CD4-positive, alpha-beta memory T cell (primary cell): ENCODE measurements at regions of chr4 and their contacts with region 1.

Region 1: GRCh38 chr4:68288393-68288740 is 42.9 kb upstream of the TMPRSS11B start:
- DNase-seq: no peak
- H3K4me3 ChIP-seq: no peak overlapping the region
- H3K4me3 Mint-ChIP-seq: no peak overlapping the region
- H3K27ac ChIP-seq: no peak overlapping the region
- H3K27ac Mint-ChIP-seq: no peak overlapping the region
- H3K4me1 ChIP-seq: no peaks in the 10 kb centered on the region
- H3K4me1 Mint-ChIP-seq: peaks cover 0 to 4% (median 0%) of the 10 kb centered on the region in 4 donors
- H3K27me3 ChIP-seq: no peaks in the 10 kb centered on the region
- H3K27me3 Mint-ChIP-seq: peaks cover 4 to 5% of the 10 kb centered on the region in 2 donors

Region 2: DNA sequence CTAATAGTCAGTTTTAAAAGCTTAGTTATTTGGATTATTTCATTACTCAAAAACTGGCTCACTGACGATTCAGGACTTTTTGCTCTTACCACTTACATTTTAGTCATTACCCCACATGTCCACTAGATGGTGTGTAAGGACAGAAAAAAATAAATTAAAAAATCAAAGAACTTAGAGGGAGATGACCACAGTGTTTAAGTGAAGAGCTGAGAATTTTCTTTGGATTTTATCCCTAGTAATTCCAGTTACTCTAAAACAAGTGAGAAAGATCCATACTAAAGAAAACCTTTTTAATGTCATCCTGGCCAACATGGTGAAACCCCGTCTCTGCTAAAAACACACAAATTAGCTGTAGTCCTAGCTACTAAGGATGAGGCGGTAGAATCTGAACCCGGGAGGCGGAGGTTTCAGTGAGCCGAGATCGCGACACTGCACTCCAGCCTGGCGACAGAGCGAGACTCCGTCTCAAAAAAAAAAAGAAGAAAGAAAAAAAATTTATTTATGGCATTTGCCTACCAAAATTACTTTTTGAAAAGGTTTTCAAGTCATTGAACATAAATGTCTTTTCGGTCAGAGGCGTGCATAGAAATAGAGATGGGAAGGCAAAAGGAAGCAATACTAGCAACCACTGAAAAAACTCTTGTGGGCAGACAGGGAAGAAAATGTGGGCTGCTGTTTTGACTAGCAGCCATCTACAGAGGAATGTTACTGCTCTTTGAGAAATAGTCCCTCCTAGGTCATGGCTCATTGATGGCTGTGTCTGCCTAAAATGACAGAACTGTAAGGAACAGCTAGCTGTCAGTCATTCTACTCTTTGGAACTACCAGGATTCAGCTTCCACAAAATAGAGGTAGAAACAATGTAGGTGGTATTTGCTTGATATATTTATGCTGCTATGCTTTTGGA is 16.3 kb before region 1 on chr4:
- CTCF ChIA-PET with region 1: interaction called, 10 read pairs
- POLR2A ChIA-PET with region 1: no interaction called
- intact Hi-C with region 1: no loop called
- DNase-seq: peak in 4 of 5 donors; percentile 39 to 42 (median 41)
- H3K4me3 ChIP-seq: no peak overlapping the region
- H3K4me3 Mint-ChIP-seq: peak overlapping the region in 4 of 8 donors; percentile 16 to 63 (median 50)
- H3K27ac ChIP-seq: no peak overlapping the region
- H3K27ac Mint-ChIP-seq: no peak overlapping the region
- H3K4me1 ChIP-seq: no peaks in the 10 kb centered on the region
- H3K4me1 Mint-ChIP-seq: peaks cover 0 to 4% (median 1%) of the 10 kb centered on the region in 4 donors
- H3K27me3 ChIP-seq: no peaks in the 10 kb centered on the region
- H3K27me3 Mint-ChIP-seq: peaks cover 7 to 8% of the 10 kb centered on the region in 2 donors